ENCODE measurements at regions of chr2 and their contacts with region 1.

Region 1: GRCh38 chr2:235493775-235494715 is at the start of gene AGAP1:
- DNase-seq: peak; percentile 95
- H3K4me3 Mint-ChIP-seq: peak within 1 kb of the TSS; percentile 79
- H3K27ac Mint-ChIP-seq: peak within 1 kb of the TSS; percentile 62
- H3K4me1 Mint-ChIP-seq: peaks cover 18% of the 10 kb centered on the region
- H3K27me3 Mint-ChIP-seq: peaks cover 19% of the 10 kb centered on the region
- CTCF ChIP-seq: no peak
- total RNA-seq, gene AGAP1: 56.4 and 63.8 TPM in 2 replicates

Region 2: GRCh38 chr2:235135990-235136561 is 358.0 kb before region 1 on chr2:
- CTCF ChIA-PET with region 1: no interaction called
- intact Hi-C with region 1: loop called (anchors 2 kb)
- DNase-seq: peak; percentile 85
- H3K4me3 Mint-ChIP-seq: no peak overlapping the region
- H3K27ac Mint-ChIP-seq: no peak overlapping the region
- H3K4me1 Mint-ChIP-seq: peaks cover 5% of the 10 kb centered on the region
- H3K27me3 Mint-ChIP-seq: peaks cover 52% of the 10 kb centered on the region
- CTCF ChIP-seq: peak; percentile 90

Region 3: DNA sequence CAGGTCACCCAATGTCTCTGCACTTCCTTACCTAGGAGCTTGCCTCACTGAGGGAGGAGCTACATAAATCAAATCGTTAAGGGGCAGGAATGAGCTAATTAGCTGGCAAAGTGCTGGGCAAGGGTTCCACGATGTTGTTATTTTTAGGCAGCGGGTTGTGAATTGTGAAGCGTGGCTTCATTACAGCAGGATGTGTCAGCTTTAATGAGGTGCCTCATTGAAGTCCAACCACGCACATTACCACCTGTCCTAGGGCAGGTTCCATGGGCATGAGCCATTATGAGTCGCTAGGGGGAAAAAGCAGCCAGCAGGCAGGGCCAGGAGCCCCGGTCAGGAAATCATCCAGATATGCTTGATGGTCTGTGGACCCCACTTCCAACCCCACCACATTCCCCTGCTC is 127.2 kb before region 1 on chr2:
- CTCF ChIA-PET with region 1: no interaction called
- intact Hi-C with region 1: no loop called
- DNase-seq: no peak
- H3K4me3 Mint-ChIP-seq: no peak overlapping the region
- H3K27ac Mint-ChIP-seq: no peak overlapping the region
- H3K4me1 Mint-ChIP-seq: no peaks in the 10 kb centered on the region
- H3K27me3 Mint-ChIP-seq: peaks cover 96% of the 10 kb centered on the region
- CTCF ChIP-seq: no peak

Region 4: GRCh38 chr2:235390103-235390812 is 103.8 kb before region 1 on chr2:
- CTCF ChIA-PET with region 1: no interaction called
- intact Hi-C with region 1: loop called (anchors 10 kb)
- DNase-seq: peak; percentile 53
- H3K4me3 Mint-ChIP-seq: no peak overlapping the region
- H3K27ac Mint-ChIP-seq: peak overlapping the region; percentile 1
- H3K4me1 Mint-ChIP-seq: peaks cover 28% of the 10 kb centered on the region
- H3K27me3 Mint-ChIP-seq: peaks cover 21% of the 10 kb centered on the region
- CTCF ChIP-seq: no peak

Region 5: DNA sequence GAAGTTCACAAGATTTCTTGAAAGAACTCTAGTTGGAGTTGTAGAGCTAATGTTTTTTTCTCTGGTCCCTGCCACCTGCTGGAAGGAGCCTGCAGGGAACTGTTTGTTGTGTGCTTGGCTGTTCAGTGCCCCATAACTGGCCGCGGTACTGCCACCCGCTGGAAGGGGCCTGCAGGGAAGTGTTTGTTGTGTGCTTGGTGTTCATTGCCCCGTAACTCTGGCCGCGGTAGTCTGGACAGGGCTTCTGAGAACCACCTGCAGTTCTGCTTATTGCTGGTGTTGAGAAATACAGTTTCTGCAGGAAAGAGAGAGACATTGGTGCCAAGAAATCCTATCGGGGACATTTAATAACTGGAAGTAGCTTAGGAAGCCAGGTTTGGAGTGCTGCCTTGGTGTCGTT is 57.9 kb after region 1 on chr2:
- CTCF ChIA-PET with region 1: interaction called, 5 read pairs
- intact Hi-C with region 1: loop called (anchors 1 kb)
- DNase-seq: peak; percentile 76
- H3K4me3 Mint-ChIP-seq: peak overlapping the region; percentile 43
- H3K27ac Mint-ChIP-seq: peak overlapping the region; percentile 60
- H3K4me1 Mint-ChIP-seq: peaks cover 61% of the 10 kb centered on the region
- H3K27me3 Mint-ChIP-seq: no peaks in the 10 kb centered on the region
- CTCF ChIP-seq: peak; percentile 55